ENCODE measurements at regions of chr3 and their contacts with region 1.

Region 1: GRCh38 chr3:61371123-61371522 is 119.9 kb upstream of the FHIT start:
- DNase-seq: no peak
- H3K4me3 Mint-ChIP-seq: no peak overlapping the region
- H3K27ac Mint-ChIP-seq: no peak overlapping the region
- H3K4me1 Mint-ChIP-seq: no peaks in the 10 kb centered on the region
- H3K27me3 Mint-ChIP-seq: no peaks in the 10 kb centered on the region
- CTCF ChIP-seq: peak; percentile 39

Region 2: DNA sequence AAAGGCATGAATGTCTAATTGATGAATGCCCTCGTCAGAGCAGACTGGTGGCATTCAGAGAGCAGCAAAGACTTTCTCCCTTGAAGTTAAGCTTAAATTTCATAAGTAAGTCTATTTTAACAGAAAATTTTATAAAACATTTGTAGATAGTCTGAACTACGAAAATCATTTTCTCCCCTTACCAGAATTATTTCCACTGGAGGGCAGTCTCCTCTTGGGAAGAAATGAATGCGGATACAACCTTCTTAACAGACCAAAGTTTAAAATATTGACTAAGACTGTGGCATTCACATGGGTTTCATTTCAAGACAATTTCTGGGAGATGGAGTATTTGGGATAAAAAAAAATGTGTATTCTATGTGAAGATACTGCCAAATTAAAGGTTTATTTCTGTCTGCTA is 788.8 kb before region 1 on chr3:
- CTCF ChIA-PET with region 1: no interaction called
- intact Hi-C with region 1: loop called (anchors 10 kb)
- DNase-seq: no peak
- H3K4me3 Mint-ChIP-seq: no peak overlapping the region
- H3K27ac Mint-ChIP-seq: no peak overlapping the region
- H3K4me1 Mint-ChIP-seq: no peaks in the 10 kb centered on the region
- H3K27me3 Mint-ChIP-seq: no peaks in the 10 kb centered on the region
- CTCF ChIP-seq: no peak

Region 3: GRCh38 chr3:61202086-61202485 is 169.0 kb before region 1 on chr3:
- CTCF ChIA-PET with region 1: no interaction called
- intact Hi-C with region 1: no loop called
- DNase-seq: no peak
- H3K4me3 Mint-ChIP-seq: no peak overlapping the region
- H3K27ac Mint-ChIP-seq: no peak overlapping the region
- H3K4me1 Mint-ChIP-seq: no peaks in the 10 kb centered on the region
- H3K27me3 Mint-ChIP-seq: no peaks in the 10 kb centered on the region
- CTCF ChIP-seq: no peak

Measured in Calu3 (cell line).